ENCODE measurements at regions of chr17 and their contacts with region 1.

Region 1: GRCh38 chr17:75046582-75047289 is at the starts of genes ATP5PD and KCTD2:
- DNase-seq: peak; percentile 96
- ATAC-seq: peak; percentile 95
- H3K4me3 Mint-ChIP-seq: peak within 1 kb of the TSS; percentile 98
- H3K27ac Mint-ChIP-seq: peak within 1 kb of the TSS; percentile 92
- H3K4me1 Mint-ChIP-seq: peaks cover 40% of the 10 kb centered on the region
- H3K27me3 Mint-ChIP-seq: no peaks in the 10 kb centered on the region
- CTCF ChIP-seq: no peak
- total RNA-seq, gene ATP5PD: 177 to 183 TPM
- total RNA-seq, gene KCTD2: 10.5 to 11.4 TPM

Region 2: DNA sequence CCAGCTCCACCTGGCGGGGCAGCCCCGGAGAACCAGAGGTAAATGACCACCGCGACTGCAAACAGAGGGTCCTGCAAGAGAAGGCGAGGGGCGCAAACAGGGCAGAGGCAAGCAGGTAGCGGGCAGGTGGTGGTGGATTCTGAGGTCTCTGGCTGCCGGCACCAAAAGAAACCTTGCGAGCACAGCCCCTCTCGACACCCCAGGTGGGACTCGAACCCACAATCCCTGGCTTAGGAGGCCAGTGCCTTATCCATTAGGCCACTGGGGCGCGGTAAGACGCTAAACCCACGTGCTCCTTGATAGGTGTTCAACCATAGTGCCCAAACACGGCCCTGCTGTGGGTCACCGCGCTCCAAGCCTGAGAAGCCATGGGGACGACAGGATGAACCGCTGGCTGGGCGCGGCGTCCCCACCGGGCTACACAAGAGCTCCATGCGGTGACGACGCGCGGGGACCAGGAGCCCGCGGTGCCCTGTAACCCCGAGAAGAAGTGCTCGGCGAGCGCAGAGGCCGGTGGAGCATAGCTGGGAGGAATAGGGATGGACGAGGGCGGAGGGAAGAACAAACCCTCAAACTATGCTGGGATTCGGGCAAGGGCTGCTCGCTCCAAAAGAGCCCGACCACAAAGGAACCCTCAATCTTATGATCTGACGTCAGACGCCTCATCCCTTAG is 12.4 kb before region 1 on chr17:
- CTCF ChIA-PET with region 1: no interaction called
- POLR2A ChIA-PET with region 1: interaction called, 14 read pairs
- intact Hi-C with region 1: no loop called
- DNase-seq: peak; percentile 97
- ATAC-seq: peak; percentile 66
- H3K4me3 Mint-ChIP-seq: peak overlapping the region; percentile 96
- H3K27ac Mint-ChIP-seq: peak overlapping the region; percentile 97
- H3K4me1 Mint-ChIP-seq: peaks cover 42% of the 10 kb centered on the region
- H3K27me3 Mint-ChIP-seq: peaks cover 3% of the 10 kb centered on the region
- CTCF ChIP-seq: no peak

Region 3: DNA sequence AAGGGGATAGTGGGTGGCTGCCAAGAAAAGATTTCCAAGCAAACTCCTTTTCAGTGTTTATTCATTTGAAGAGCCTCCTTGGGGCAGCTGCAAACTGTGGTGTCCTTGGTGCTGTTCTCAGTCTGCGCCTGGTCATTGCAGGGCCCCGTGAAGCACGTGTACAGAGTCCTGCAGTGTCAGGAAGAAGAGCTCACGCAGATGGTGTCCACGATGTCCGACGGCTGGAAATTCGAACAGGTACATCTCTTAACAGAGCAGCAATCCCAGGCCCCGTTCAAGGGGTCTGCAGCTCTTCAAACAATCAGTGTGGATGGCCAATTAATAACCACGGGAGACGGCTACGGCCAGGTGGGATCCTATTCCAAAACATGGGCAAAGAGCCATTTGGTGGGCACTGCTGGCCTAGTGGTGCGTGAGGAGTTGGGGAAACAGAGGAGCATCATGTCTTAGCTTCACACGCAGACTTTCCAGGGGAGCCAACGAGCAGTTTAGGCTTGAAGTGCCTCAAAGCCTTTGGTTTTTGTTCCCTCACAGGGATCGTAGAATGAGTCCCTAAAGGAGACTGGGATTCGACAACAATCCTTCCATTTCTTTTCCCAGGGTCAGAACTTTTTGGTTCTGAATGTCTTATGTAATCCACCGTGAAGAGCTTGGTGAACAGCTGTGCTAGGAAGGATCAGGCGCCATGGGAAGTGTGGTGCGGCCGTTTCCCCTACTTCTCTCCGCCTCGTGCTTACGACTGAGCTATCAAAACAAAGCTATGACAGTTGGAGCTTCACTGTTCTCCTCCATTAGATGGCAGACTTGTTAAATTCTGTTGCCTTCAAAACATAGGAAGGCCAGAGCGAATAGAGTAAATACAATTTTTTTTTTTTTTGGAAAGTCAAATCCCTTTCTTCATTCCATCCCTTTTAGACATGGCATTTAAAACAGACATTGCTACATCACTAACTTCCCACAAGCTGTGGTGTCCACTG is 12.9 kb after region 1 on chr17:
- CTCF ChIA-PET with region 1: interaction called, 10 read pairs
- POLR2A ChIA-PET with region 1: interaction called, 6 read pairs
- intact Hi-C with region 1: no loop called
- DNase-seq: no peak
- ATAC-seq: no peak
- H3K4me3 Mint-ChIP-seq: no peak overlapping the region
- H3K27ac Mint-ChIP-seq: no peak overlapping the region
- H3K4me1 Mint-ChIP-seq: peaks cover 8% of the 10 kb centered on the region
- H3K27me3 Mint-ChIP-seq: no peaks in the 10 kb centered on the region
- CTCF ChIP-seq: no peak

Region 4: GRCh38 chr17:75131280-75132017 is 84.7 kb after region 1 on chr17 and contains the start of gene NT5C:
- CTCF ChIA-PET with region 1: interaction called, 11 read pairs
- POLR2A ChIA-PET with region 1: no interaction called
- intact Hi-C with region 1: no loop called
- DNase-seq: peak; percentile 86
- ATAC-seq: peak; percentile 83
- H3K4me3 Mint-ChIP-seq: peak within 1 kb of the TSS; percentile 86
- H3K27ac Mint-ChIP-seq: peak within 1 kb of the TSS; percentile 93
- H3K4me1 Mint-ChIP-seq: peaks cover 12% of the 10 kb centered on the region
- H3K27me3 Mint-ChIP-seq: no peaks in the 10 kb centered on the region
- CTCF ChIP-seq: peak; percentile 51
- total RNA-seq, gene NT5C: 66.1 to 68.1 TPM

Measured in activated CD8-positive, alpha-beta T cell treated with anti-CD3 and anti-CD28 coated beads for 36 hours (primary cell).